ENCODE measurements at regions of chr1 and their contacts with region 1.

Region 1: DNA sequence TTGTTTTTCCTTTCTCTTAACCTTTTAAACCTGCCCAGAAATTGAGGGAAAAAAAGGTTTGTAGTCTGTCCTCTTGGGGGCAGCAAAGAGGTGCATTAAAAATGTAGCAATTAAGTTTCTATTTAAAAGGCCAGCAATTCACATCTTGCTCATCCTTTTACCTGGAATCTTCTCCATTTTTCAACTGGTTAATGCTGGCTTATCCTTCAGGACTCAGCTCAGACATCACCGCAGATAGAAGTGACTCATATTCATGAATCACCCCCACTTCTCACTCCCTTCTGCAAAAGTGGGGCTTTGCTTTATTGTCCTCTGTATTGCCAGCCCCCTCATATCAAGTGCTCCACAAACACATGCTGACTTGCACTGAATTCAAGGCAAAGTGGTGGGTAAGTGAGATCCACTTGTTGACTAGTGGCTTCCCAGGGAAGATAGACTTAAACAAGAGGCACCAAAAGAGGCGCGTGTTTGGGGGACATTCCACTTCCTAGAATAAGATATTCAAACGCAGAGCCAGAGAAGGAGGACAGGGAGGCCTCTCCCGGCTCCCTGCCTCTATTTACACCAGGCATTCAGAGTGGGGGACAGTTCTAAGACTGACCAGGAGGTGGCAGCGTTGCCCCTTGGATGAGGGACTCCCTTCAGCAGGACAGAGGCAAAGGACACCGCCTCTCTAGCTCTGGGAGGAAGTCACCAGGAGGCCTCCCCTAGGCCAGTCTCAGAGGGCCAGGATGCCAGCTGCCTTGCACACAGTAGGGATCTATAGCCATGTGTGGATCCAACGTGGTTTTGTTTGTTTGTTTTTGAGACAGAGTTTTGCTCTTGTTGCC is 23.2 kb upstream of the ZNF648 start:
- DNase-seq: peak; percentile 90
- H3K4me3 Mint-ChIP-seq: no peak overlapping the region
- H3K27ac Mint-ChIP-seq: peak overlapping the region; percentile 80
- H3K4me1 Mint-ChIP-seq: peaks cover 56% of the 10 kb centered on the region
- H3K27me3 Mint-ChIP-seq: no peaks in the 10 kb centered on the region

Region 2: GRCh38 chr1:181479137-181479745 is 605.5 kb before region 1 on chr1:
- CTCF ChIA-PET with region 1: interaction called, 98 read pairs
- DNase-seq: peak; percentile 42
- H3K4me3 Mint-ChIP-seq: no peak overlapping the region
- H3K27ac Mint-ChIP-seq: no peak overlapping the region
- H3K4me1 Mint-ChIP-seq: peaks cover 15% of the 10 kb centered on the region
- H3K27me3 Mint-ChIP-seq: peaks cover 52% of the 10 kb centered on the region

Region 3: DNA sequence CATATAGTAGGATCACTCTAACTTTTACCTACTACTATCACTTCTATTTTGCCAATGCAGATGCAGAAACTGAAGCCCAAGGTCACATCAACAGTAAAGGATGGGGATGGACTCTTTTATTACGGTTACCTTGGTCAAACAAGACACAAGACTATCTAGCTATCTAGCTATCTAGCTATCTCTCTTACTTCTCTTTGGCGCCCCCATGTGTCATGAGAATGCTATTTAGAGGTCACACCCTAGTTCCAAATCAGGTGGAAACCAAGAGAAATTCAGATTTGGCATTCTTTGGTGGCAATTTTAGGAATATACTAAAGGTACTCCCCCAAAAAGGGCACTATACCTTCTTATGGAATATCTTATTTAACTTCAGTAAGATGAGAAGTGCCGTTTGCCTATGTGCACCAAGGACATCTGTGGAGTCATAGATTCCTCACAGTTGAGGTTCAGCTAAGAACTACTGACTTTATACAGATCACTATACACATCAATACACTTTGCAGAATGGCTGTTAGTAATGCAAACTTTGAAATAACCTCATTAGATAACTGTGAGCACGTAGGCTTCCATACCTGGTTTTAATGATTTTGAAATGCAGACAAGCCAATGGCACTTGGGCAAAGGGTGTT is 29.9 kb before region 1 on chr1:
- CTCF ChIA-PET with region 1: interaction called, 33 read pairs
- DNase-seq: peak; percentile 76
- H3K4me3 Mint-ChIP-seq: no peak overlapping the region
- H3K27ac Mint-ChIP-seq: no peak overlapping the region
- H3K4me1 Mint-ChIP-seq: peaks cover 22% of the 10 kb centered on the region
- H3K27me3 Mint-ChIP-seq: peaks cover 40% of the 10 kb centered on the region

Region 4: GRCh38 chr1:182143154-182143657 is 58.5 kb after region 1 on chr1:
- CTCF ChIA-PET with region 1: interaction called, 110 read pairs
- DNase-seq: peak; percentile 91
- H3K4me3 Mint-ChIP-seq: no peak overlapping the region
- H3K27ac Mint-ChIP-seq: peak overlapping the region; percentile 9
- H3K4me1 Mint-ChIP-seq: peaks cover 36% of the 10 kb centered on the region
- H3K27me3 Mint-ChIP-seq: peaks cover 18% of the 10 kb centered on the region

Region 5: DNA sequence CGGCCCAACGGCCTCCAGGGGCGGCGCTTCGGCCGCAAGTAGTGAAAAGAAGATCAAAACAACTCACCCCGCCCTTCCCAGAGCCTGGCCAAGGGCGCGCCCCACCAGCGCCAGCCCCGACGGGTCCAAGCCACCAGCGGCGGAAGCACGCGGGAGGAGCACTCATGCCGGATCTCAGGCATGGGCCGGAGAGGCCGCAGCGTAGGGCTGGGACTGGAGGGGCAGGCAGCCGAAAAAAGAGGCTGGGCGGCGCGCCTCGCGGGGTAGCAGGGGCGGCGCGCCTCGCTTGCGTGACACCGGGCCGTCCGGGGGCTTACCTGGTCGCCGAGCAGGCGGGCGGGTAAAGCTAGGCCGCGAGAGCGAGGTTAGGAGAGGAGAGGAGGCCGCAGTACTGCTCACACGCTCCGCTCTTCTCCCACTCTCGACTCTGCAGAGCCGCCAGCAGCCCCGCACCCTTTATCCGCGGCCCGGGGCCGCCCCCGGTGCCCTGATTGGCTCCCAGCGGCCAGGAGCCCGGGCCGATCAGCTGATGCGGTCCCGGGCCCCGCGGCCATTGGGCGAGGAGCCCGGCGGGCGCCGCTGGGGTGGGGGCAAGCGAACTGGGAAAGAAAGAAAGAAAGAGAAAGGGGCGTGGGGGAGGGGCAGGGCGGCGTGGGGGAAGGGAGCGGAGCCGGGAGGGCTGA is 306.8 kb after region 1 on chr1 and contains the start of gene GLUL:
- CTCF ChIA-PET with region 1: interaction called, 167 read pairs
- DNase-seq: peak; percentile 88
- H3K4me3 Mint-ChIP-seq: peak within 1 kb of the TSS; percentile 99
- H3K27ac Mint-ChIP-seq: peak within 1 kb of the TSS; percentile 97
- H3K4me1 Mint-ChIP-seq: peaks cover 52% of the 10 kb centered on the region
- H3K27me3 Mint-ChIP-seq: peaks cover 23% of the 10 kb centered on the region

Region 6: DNA sequence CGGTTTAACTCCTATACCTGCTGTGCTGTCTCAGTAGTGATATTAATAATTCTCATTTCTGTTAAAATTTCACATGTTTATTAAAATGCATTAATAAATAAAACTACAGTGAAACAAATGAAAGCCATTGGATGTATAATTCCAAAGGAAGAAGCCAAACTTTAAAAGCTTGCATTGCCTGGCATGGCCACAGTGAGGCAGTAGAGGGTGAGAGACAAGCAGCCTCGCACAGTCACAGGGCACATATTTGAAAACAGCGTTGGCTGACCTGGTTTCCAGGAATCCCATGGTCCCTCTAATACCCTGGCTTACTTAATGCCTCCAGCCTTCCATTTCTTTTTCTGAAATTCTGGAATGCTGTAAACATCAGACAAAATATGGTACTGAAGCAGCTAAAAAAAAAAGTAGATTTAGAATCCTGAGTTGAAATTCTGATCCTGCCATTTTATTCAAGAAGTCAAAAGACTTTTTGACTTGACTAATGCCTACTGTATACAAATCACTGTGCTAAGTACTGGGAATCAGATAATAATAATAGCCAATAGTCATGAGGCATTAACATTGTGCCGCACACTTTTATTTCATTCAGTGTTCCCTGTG is 511.0 kb after region 1 on chr1:
- CTCF ChIA-PET with region 1: interaction called, 12 read pairs
- DNase-seq: peak; percentile 74
- H3K4me3 Mint-ChIP-seq: no peak overlapping the region
- H3K27ac Mint-ChIP-seq: no peak overlapping the region
- H3K4me1 Mint-ChIP-seq: peaks cover 4% of the 10 kb centered on the region
- H3K27me3 Mint-ChIP-seq: peaks cover 40% of the 10 kb centered on the region

Measured in activated naive CD4-positive, alpha-beta T cell treated with anti-CD3 and anti-CD28 coated beads, Interleukin-2, amount 10 ng/mL, durations not matched to agents 7 days and 5 days (primary cell).